SK-N-SH (cell line): ENCODE measurements at regions of chr6 and their contacts with region 1.

Region 1: GRCh38 chr6:43951063-43951755 is 176.0 kb downstream of the MRPL14 start:
- DNase-seq: peak; percentile 83
- H3K4me3 ChIP-seq: no peak overlapping the region
- H3K27ac ChIP-seq: peak overlapping the region in 1 of 2 experiments; percentile 87; a peak in 2 of 4 replicates
- H3K4me1 ChIP-seq: peaks cover 0 to 47% of the 10 kb centered on the region in 2 experiments; a peak in 1 of 4 replicates
- H3K27me3 ChIP-seq: no peaks in the 10 kb centered on the region
- CTCF ChIP-seq: peak; percentile 34
- EP300 ChIP-seq: no peak; a peak in 2 of 4 replicates
- RAD21 ChIP-seq: peak; percentile 89

Region 2: DNA sequence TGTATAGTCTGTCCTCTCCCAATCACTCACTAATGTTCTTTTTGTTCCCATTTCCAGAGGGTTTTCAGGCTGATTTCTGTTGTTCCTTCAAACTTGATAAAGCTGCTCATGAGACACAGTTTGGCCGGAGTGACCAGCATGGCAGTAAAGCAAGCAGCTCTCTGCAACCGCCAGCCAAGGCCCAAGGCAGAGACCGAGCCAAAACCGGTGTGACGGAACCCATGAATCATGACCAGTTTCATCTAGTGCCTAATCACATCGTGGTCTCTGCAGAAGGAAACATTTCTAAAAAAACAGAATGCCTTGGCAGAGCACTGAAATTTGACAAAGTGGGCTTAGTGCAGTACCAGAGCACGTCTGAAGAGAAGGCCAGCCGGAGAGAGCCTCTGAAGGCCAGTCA is 1086.6 kb before region 1 on chr6:
- CTCF ChIA-PET with region 1: no interaction called
- POLR2A ChIA-PET with region 1: no interaction called
- DNase-seq: no peak
- H3K4me3 ChIP-seq: no peak overlapping the region
- H3K27ac ChIP-seq: no peak overlapping the region
- H3K4me1 ChIP-seq: no peaks in the 10 kb centered on the region
- H3K27me3 ChIP-seq: no peaks in the 10 kb centered on the region
- CTCF ChIP-seq: no peak
- EP300 ChIP-seq: no peak
- RAD21 ChIP-seq: no peak

Region 3: GRCh38 chr6:43774776-43775534 is 176.3 kb before region 1 on chr6:
- CTCF ChIA-PET with region 1: interaction called, 140 read pairs
- POLR2A ChIA-PET with region 1: interaction called, 43 read pairs
- DNase-seq: peak; percentile 91
- H3K4me3 ChIP-seq: peak overlapping the region; percentile 94 to 95; a peak in 3 of 4 replicates
- H3K27ac ChIP-seq: peak overlapping the region; percentile 33 to 93; a peak in 2 of 4 replicates
- H3K4me1 ChIP-seq: peaks cover 14 to 64% of the 10 kb centered on the region in 2 experiments
- H3K27me3 ChIP-seq: no peaks in the 10 kb centered on the region
- CTCF ChIP-seq: peak; percentile 81
- EP300 ChIP-seq: no peak
- RAD21 ChIP-seq: peak; percentile 54

Region 4: DNA sequence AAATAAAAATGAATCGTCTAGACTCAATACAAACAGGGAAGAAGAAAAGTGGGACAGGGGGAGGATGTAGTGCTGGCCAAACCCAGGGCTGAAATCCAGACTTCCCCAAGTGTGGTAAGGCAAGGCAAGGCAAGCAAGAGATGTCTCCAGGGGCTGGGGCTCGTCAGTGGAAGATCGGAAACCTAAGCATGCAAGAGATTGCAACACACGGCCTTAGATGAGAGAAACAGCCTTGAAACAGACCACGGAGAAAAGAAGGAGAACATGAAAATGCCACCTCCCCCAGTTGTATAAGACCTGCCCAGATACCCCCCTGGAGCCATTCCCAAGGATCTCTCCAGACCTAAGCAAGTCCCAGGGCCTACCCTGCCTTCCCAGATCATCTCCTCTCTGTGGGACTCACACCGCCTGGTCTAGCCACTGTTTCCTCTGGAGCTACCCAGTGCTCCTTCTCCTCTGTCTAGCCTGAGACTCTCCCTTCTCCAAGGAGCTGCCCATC is 161.1 kb before region 1 on chr6:
- CTCF ChIA-PET with region 1: interaction called, 10 read pairs
- POLR2A ChIA-PET with region 1: interaction called, 6 read pairs
- DNase-seq: no peak
- H3K4me3 ChIP-seq: no peak overlapping the region
- H3K27ac ChIP-seq: no peak overlapping the region; a peak in 1 of 4 replicates
- H3K4me1 ChIP-seq: peaks cover 0 to 5% of the 10 kb centered on the region in 2 experiments; a peak in 1 of 4 replicates
- H3K27me3 ChIP-seq: no peaks in the 10 kb centered on the region
- CTCF ChIP-seq: no peak
- EP300 ChIP-seq: no peak
- RAD21 ChIP-seq: no peak

Region 5: GRCh38 chr6:43856005-43856765 is 95.0 kb before region 1 on chr6:
- CTCF ChIA-PET with region 1: interaction called, 88 read pairs
- POLR2A ChIA-PET with region 1: interaction called, 5 read pairs
- DNase-seq: peak; percentile 74
- H3K4me3 ChIP-seq: no peak overlapping the region
- H3K27ac ChIP-seq: peak overlapping the region in 1 of 2 experiments; percentile 92; a peak in 2 of 4 replicates
- H3K4me1 ChIP-seq: peaks cover 0 to 41% of the 10 kb centered on the region in 2 experiments; a peak in 1 of 4 replicates
- H3K27me3 ChIP-seq: no peaks in the 10 kb centered on the region
- CTCF ChIP-seq: peak; percentile 42
- EP300 ChIP-seq: no peak
- RAD21 ChIP-seq: peak; percentile 74

Region 6: GRCh38 chr6:43926634-43927524 is 24.3 kb before region 1 on chr6:
- CTCF ChIA-PET with region 1: interaction called, 19 read pairs
- POLR2A ChIA-PET with region 1: interaction called, 6 read pairs
- DNase-seq: peak; percentile 81
- H3K4me3 ChIP-seq: no peak overlapping the region
- H3K27ac ChIP-seq: peak overlapping the region; percentile 27 to 98; a peak in 3 of 4 replicates
- H3K4me1 ChIP-seq: peaks cover 40 to 82% of the 10 kb centered on the region in 2 experiments
- H3K27me3 ChIP-seq: no peaks in the 10 kb centered on the region
- CTCF ChIP-seq: no peak
- EP300 ChIP-seq: peak in 1 of 2 experiments; percentile 51; a peak in 2 of 4 replicates
- RAD21 ChIP-seq: peak; percentile 34

Region 7: GRCh38 chr6:43990627-43991619 is 39.7 kb after region 1 on chr6:
- CTCF ChIA-PET with region 1: interaction called, 33 read pairs
- POLR2A ChIA-PET with region 1: interaction called, 11 read pairs
- DNase-seq: peak; percentile 83
- H3K4me3 ChIP-seq: no peak overlapping the region
- H3K27ac ChIP-seq: peak overlapping the region in 1 of 2 experiments; percentile 98; a peak in 3 of 4 replicates
- H3K4me1 ChIP-seq: peaks cover 17 to 68% of the 10 kb centered on the region in 2 experiments; a peak in 2 of 4 replicates
- H3K27me3 ChIP-seq: no peaks in the 10 kb centered on the region
- CTCF ChIP-seq: no peak
- EP300 ChIP-seq: peak in 1 of 2 experiments; percentile 59; a peak in 2 of 4 replicates
- RAD21 ChIP-seq: peak; percentile 22; the same call in 1 of the 2 replicates

Region 8: GRCh38 chr6:44064089-44064947 is 113.1 kb after region 1 on chr6:
- CTCF ChIA-PET with region 1: interaction called, 30 read pairs
- POLR2A ChIA-PET with region 1: no interaction called
- DNase-seq: no peak
- H3K4me3 ChIP-seq: no peak overlapping the region
- H3K27ac ChIP-seq: peak overlapping the region; percentile 0 to 73; a peak in 3 of 4 replicates
- H3K4me1 ChIP-seq: peaks cover 34 to 63% of the 10 kb centered on the region in 2 experiments; a peak in 3 of 4 replicates
- H3K27me3 ChIP-seq: no peaks in the 10 kb centered on the region
- CTCF ChIP-seq: no peak
- EP300 ChIP-seq: no peak; a peak in 1 of 4 replicates
- RAD21 ChIP-seq: no peak